Panc1 (cell line): ENCODE measurements at regions of chr11 and their contacts with region 1.

Region 1: GRCh38 chr11:14454861-14455632 is 44.6 kb downstream of the COPB1 start:
- DNase-seq: peak; percentile 28
- ATAC-seq: peak; percentile 68
- H3K4me3 ChIP-seq: no peak overlapping the region
- H3K27ac ChIP-seq: no peak overlapping the region
- H3K4me1 ChIP-seq: no peaks in the 10 kb centered on the region
- H3K27me3 ChIP-seq: no peaks in the 10 kb centered on the region
- CTCF ChIP-seq: peak; percentile 78

Region 2: GRCh38 chr11:14275076-14275475 is 180.0 kb before region 1 on chr11:
- CTCF ChIA-PET with region 1: no interaction called
- POLR2A ChIA-PET with region 1: interaction called, 17 read pairs
- in situ Hi-C with region 1: no loop called
- intact Hi-C with region 1: no loop called
- DNase-seq: no peak
- ATAC-seq: no peak
- H3K4me3 ChIP-seq: no peak overlapping the region
- H3K27ac ChIP-seq: no peak overlapping the region
- H3K4me1 ChIP-seq: no peaks in the 10 kb centered on the region
- H3K27me3 ChIP-seq: no peaks in the 10 kb centered on the region
- CTCF ChIP-seq: no peak

Region 3: DNA sequence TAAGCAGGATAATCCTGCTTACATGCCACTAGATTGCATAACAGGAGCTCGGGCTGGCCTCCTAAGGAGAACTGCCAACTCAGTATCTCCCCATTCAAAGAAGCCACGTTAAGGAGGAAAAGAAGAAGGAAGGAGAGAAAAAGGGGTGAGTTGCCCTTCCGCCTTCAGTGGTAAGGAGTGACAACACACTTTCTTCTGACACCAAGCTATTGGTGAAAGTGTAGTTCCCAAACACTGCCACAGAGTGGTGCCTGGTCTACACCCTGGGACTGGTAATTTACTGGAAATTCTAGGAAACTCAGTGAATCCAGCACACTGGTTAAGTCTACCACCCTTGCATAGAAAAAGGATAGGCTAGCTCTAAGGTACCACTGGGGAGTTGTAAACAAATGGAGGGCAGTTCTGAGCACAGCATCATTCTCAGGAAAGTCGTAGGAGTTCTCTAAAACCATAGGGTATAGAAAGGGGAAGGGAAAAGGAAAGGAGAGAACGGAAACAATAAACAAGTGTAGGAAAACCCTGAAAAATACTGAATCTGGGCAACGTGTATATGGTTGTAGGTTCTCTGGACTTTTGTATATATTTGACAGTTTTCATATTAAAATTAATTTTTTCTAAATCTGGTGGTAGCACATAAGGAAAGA is 154.3 kb before region 1 on chr11:
- CTCF ChIA-PET with region 1: interaction called, 47 read pairs
- POLR2A ChIA-PET with region 1: no interaction called
- in situ Hi-C with region 1: no loop called
- intact Hi-C with region 1: loop called (anchors 1 kb)
- DNase-seq: peak; percentile 58
- ATAC-seq: peak; percentile 96
- H3K4me3 ChIP-seq: no peak overlapping the region
- H3K27ac ChIP-seq: no peak overlapping the region
- H3K4me1 ChIP-seq: no peaks in the 10 kb centered on the region
- H3K27me3 ChIP-seq: no peaks in the 10 kb centered on the region
- CTCF ChIP-seq: peak; percentile 89

Region 4: DNA sequence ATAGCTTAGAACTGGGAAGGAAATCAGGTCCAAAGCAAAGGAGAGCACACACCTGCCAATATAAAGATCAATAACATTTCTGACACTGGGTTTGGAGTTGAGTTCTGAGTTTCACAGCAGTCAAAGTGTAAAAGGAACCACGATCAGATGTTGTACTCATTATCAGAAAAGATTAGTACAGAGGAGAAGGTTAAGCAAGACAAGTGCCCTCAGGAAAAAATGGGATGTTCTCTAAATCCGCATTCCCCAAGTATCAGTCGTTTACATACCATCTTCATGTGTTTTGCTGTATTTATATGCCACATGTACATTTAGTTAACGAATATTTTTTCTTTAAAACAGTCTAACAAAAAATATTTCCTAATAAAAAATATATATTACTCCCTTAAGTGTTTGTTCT is 73.1 kb before region 1 on chr11:
- CTCF ChIA-PET with region 1: interaction called, 16 read pairs
- POLR2A ChIA-PET with region 1: no interaction called
- in situ Hi-C with region 1: no loop called
- intact Hi-C with region 1: no loop called
- DNase-seq: no peak
- ATAC-seq: no peak
- H3K4me3 ChIP-seq: no peak overlapping the region
- H3K27ac ChIP-seq: no peak overlapping the region
- H3K4me1 ChIP-seq: no peaks in the 10 kb centered on the region
- H3K27me3 ChIP-seq: no peaks in the 10 kb centered on the region; the same call in 1 of the 2 replicates
- CTCF ChIP-seq: no peak

Region 5: GRCh38 chr11:14408612-14409011 is 46.4 kb before region 1 on chr11:
- CTCF ChIA-PET with region 1: no interaction called
- POLR2A ChIA-PET with region 1: no interaction called
- in situ Hi-C with region 1: no loop called
- intact Hi-C with region 1: no loop called
- DNase-seq: no peak
- ATAC-seq: no peak
- H3K4me3 ChIP-seq: no peak overlapping the region
- H3K27ac ChIP-seq: no peak overlapping the region
- H3K4me1 ChIP-seq: no peaks in the 10 kb centered on the region
- H3K27me3 ChIP-seq: no peaks in the 10 kb centered on the region
- CTCF ChIP-seq: no peak